GM18951 (cell line): ENCODE measurements at regions of chrX and their contacts with region 1.

Region 1: DNA sequence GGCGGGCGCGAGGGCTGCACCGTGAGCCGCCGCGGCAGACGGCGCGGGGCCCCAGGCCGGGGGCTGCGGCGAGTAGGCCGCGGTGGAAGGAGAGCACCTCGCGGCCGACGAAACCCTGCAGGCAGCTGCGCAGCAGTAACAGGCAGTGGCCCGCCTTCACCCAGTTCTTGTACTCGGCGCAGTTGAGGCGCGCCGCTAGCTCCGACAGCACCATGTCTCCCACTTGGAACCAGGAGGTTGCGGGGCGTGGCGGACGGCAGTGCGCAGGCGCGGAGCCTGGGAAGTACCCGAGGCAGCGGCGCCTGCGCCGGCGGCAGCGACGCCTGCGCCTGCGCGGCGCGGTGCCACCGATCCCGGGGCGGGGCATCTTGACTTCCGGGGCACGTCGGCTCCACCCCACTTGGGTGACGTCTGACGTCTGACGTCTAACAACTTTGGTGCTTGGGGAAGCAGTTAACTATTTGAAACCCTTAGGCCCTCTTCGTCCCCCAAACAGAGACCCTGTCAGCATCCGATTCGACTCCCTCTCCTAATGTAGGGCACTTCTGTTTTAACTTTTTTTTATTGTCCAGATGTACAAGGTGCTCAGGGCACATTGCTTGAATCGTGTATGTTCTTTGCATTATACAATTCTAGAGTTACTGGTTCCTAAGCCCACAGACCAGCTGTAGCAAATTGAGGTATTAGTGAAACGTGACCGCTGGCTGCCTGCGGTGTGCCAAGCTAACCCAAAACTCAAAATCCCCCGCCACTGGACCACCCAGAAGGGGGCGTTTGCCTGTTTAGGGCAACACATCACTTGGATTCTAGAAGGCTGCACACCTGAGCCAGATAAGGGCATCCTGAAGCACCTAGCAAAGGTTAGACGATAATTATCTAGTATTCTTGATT is at the start of gene CXorf38:
- POLR2A ChIP-seq: peak; percentile 84

Region 2: DNA sequence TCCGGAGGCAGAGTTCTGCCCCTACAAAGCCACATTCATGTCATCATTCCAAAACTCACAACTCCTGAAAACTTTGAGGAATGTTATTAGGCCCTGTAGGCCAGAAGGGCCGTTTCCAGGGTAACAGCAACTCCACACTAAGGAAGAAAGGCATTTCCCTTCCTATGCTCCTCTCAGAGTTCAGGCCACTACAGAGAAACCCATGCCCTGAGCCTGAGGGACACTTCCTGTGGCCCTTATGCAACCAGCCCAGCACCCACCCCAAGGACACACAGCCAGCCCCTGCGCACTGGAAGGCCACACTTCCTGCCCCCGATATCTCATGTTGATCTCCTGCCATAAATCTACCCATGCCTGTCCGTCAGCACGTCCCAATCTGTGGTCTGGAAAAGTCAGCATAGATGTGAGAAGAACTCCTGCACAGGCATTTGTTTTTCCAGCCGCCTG is 839.1 kb before region 1 on chrX:
- in situ Hi-C with region 1: loop called (anchors 10 kb)
- POLR2A ChIP-seq: no peak

Region 3: DNA sequence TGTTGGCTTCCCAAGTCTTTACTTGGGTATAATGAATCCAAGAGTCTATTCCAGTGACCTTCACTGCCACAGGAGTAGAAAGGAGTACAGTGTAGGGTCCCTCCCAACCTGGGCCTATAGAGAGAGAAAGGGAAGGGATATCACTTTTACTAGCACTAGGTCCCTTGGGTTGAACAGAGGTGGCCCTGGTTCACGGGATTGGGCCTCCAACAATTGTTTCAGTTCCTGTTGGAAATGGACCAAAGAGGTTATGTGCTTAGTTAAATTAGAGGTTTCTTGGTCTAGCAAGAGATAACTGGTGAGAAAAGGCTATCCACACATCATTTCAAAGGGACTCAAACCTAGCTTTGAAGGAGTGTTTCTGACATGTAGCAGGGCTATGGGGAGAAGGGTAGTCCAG is 144.9 kb after region 1 on chrX:
- in situ Hi-C with region 1: loop called (anchors 10 kb)
- POLR2A ChIP-seq: no peak

Region 4: GRCh38 chrX:40809210-40809609 is 161.7 kb after region 1 on chrX:
- in situ Hi-C with region 1: no loop called
- POLR2A ChIP-seq: no peak

Region 5: GRCh38 chrX:41116948-41117347 is 469.4 kb after region 1 on chrX:
- in situ Hi-C with region 1: loop called (anchors 25 kb)
- POLR2A ChIP-seq: no peak